HEK293T (cell line): ENCODE measurements at regions of chr14 and their contacts with region 1.

Region 1: DNA sequence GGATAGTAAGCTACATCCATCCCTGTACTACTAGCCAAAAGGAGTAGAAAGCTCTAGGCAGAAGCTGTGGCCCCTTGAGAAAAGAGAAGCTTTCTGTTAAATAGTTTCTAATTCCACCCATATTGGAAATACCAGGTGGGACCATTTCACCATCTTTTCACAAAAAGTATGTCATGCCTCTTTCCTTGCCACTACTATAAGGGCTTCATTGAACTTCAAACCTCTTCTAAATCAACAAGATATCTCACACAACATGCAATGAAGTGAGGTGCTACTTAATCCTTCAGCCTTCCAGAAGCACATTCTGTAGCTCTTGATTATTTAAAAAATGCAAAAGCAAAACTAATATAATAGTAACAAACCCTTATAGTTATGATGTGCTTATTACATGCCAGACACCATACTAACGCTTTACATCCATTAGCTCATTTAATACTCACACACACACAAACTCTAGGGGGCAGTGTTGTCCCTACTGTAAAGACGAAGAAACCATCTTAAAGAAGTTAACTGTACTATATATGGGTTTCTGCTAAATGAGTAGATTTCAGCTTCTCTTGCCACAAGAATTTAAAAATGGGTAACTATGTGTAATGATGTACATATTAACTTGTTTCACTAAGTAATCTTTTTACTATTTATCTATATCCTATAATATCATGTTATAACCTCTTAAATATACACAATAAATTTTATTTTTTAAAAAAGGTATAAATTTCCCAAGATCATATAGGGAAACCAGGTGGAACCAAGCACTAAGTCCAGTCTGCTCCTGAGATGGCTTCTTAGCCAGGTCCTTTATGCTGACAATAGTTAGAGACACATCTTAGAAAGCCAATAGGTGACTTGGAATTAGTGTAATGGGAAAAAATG is 124.4 kb downstream of the RPS29 start:
- DNase-seq: peak; percentile 30

Region 2: GRCh38 chr14:49447540-49448107 is 14.1 kb before region 1 on chr14:
- CTCF ChIA-PET with region 1: interaction called, 32 read pairs
- POLR2A ChIA-PET with region 1: no interaction called
- DNase-seq: no peak

Region 3: DNA sequence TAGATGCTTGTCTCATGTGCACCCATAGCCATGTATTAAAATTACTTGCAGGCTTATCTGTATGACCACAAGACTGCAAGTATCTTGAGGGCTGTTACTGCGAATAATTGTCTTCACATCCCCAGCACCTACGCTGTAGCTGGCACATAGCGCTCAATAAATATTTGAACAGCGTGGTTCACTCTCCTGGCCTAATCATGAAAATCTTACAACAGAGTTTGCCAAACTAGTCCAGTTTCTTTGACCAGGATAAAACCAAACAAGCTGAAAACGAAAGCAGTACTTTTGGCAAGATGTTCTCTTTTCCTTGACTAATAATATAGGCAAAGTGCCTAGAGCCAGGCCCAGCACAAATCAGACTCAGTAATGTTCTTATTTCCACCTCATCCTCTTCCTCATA is 17.7 kb after region 1 on chr14:
- CTCF ChIA-PET with region 1: interaction called, 11 read pairs
- POLR2A ChIA-PET with region 1: no interaction called
- DNase-seq: no peak

Region 4: DNA sequence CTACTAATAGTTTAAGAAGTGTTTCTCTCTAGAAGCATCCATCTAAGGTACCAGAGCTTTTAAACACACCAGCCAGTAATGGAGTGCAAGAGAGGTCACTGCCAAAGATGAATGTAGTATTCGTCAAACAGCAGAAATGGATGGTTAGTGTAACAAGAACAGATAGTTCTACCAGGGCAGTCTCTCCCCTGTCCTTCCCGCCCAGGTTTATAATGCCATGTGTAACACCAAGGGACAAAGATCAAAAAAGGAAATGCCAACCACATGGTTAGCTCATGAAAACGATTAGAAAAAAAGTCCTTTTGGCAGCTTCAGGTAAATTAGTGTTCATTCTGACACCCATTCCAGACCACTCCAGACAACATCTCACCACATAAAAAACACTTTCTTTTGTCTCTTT is 23.5 kb after region 1 on chr14:
- CTCF ChIA-PET with region 1: interaction called, 11 read pairs
- POLR2A ChIA-PET with region 1: no interaction called
- DNase-seq: no peak

Region 5: DNA sequence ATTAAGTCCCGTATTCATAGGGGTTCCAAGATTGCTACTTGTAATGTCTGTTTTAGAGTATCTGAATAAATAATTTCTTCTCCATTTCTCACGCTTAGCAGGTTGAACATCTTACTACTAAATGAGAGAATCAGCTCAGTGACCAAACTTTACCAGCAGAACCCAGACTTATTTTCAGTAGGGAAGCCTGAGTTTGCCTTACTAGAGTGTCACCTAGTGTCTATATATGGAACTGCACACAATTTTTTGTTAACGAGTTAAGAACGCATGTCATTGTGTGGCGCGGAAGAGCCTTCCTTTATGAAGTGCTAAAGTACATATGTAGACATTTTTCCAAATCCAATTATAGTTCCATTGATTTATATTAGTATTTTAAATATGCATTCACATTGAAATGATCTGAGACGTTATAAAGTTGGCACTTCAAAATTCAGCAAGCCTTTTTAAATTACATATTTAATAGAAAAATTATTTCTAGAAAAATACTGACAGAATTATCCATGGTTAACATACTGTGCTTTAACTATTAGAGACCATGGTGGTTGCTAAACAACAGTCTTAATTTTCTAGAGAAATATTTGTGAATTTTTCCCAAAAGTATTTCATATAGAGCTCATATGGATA is 36.1 kb after region 1 on chr14:
- CTCF ChIA-PET with region 1: interaction called, 36 read pairs
- POLR2A ChIA-PET with region 1: no interaction called
- DNase-seq: peak; percentile 60

Region 6: DNA sequence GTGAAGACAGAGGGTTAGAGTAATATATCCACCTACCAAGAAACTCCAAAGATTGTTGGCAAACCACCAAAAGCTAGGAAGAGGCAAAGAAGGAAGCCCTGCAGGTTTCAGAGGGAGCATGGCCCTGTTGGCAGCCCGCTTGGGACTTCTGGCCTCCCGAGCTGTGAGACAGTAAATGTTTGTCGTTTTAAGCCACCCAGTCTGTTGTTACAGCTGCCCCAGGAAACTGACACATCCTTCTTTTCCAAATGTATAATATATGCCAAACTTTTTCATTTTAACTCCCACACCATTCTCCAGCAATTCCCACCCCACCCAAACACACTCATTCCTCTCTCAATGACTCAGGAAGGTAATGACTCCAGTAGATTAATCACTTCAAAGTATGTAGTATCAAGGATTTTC is 50.4 kb after region 1 on chr14:
- CTCF ChIA-PET with region 1: no interaction called
- POLR2A ChIA-PET with region 1: no interaction called
- DNase-seq: no peak

Region 7: DNA sequence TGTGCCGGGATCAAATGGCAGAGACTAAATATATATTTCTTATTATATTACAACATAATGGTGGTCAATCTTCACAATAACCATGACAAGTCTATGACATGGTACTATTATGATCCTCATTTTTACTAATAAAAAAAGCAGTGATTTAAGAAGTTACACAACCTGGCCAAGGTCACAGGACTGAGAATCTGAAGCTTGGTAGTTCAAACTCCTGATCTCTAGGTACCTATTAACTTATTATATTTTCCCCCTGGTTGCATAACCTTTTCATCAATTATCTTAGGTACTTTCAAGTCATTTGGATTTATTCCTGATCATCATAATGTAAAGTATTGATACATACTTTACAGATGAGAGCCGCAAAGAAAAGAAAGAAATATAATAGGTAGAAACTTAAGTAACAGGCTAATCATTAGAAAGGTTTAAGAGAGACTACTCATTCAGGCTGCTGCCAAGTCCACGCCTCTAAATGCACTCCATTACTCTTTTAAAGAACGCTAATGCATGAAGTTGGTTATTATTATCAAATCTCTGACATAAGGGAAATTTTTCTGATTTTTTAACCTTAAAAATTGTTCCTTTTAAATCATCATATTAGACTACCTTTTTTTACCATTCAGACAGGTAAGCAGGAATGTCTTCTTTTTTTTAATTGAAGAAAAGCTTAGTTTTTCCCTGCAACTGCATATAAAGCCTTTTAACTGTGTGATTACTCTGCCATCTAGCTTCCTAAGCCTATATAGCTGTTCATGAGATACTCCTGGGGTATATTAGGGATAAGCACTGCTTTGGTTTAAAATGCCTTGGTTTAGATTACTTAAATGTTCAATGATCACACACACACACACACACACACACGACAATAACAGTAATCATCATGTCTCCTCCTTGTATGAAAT is 88.8 kb after region 1 on chr14:
- CTCF ChIA-PET with region 1: interaction called, 11 read pairs
- POLR2A ChIA-PET with region 1: no interaction called
- DNase-seq: no peak